ENCODE measurements at regions of chr6 and their contacts with region 1.

Region 1: GRCh38 chr6:39302669-39303424 is 11.4 kb downstream of the KCNK17 start:
- DNase-seq: peak; percentile 25 to 41
- ATAC-seq: peak in 1 of 2 donors; percentile 66
- H3K4me3 ChIP-seq: no peak overlapping the region
- H3K27ac ChIP-seq: no peak overlapping the region
- H3K4me1 ChIP-seq: no peaks in the 10 kb centered on the region
- H3K27me3 ChIP-seq: peaks cover 0 to 7% (median 0%) of the 10 kb centered on the region in 3 donors
- CTCF ChIP-seq: peak; percentile 55 to 83 (median 73)
- POLR2A ChIP-seq: no peak

Region 2: DNA sequence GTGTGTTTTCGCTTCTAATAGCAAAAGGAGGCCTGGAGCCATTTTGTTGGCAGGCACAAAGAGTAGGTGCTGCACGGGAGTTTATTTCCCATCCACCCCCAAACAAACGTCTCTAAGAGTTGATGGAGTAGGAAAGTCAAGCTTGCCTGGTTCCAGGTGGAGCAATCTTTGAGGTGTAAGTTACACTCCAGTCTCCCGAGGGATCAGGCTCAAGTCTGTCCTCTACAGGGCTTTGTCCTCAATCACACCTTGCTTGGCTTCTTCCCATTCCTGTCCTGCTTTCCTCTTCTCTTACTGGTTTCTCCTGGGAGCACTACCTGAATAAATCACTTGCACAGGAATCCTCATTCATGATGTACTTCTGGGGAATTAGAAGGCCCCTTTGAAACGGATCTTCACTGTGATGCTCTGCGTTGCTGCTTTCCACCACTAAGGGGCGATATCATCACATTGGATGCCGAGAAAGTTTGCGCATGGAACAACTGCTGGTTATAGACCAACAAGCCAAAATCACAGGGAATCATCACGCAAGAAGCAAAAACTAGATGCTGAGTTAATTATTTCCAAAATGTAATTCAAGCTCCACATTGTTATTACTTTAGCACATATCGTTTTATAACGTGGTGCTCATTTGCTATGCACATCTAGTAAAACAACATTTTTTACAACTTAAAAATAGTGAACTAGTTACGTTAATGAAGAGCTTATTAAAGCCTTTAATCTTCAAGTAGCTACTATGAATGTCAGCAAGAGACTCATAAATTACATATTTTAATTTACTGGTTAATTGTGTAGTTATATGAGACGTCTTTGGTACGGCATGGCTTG is 430.9 kb before region 1 on chr6:
- in situ Hi-C with region 1: loop called (anchors 5 to 25 kb)
- intact Hi-C with region 1: no loop called
- DNase-seq: no peak
- ATAC-seq: no peak
- H3K4me3 ChIP-seq: no peak overlapping the region
- H3K27ac ChIP-seq: no peak overlapping the region
- H3K4me1 ChIP-seq: no peaks in the 10 kb centered on the region
- H3K27me3 ChIP-seq: peaks cover 0 to 5% (median 0%) of the 10 kb centered on the region in 3 donors
- CTCF ChIP-seq: peak; percentile 40 to 77 (median 54)
- POLR2A ChIP-seq: no peak

Region 3: GRCh38 chr6:38973178-38974054 is 329.4 kb before region 1 on chr6:
- in situ Hi-C with region 1: loop called in 3 of 4 experiments (anchors 10 to 25 kb)
- intact Hi-C with region 1: loop called (anchors 2 kb)
- DNase-seq: no peak
- ATAC-seq: peak; percentile 55 to 74
- H3K4me3 ChIP-seq: no peak overlapping the region
- H3K27ac ChIP-seq: no peak overlapping the region
- H3K4me1 ChIP-seq: no peaks in the 10 kb centered on the region
- H3K27me3 ChIP-seq: peaks cover 0 to 5% (median 0%) of the 10 kb centered on the region in 3 donors
- CTCF ChIP-seq: peak in 4 of 5 experiments; percentile 14 to 37 (median 26)
- POLR2A ChIP-seq: no peak

Region 4: DNA sequence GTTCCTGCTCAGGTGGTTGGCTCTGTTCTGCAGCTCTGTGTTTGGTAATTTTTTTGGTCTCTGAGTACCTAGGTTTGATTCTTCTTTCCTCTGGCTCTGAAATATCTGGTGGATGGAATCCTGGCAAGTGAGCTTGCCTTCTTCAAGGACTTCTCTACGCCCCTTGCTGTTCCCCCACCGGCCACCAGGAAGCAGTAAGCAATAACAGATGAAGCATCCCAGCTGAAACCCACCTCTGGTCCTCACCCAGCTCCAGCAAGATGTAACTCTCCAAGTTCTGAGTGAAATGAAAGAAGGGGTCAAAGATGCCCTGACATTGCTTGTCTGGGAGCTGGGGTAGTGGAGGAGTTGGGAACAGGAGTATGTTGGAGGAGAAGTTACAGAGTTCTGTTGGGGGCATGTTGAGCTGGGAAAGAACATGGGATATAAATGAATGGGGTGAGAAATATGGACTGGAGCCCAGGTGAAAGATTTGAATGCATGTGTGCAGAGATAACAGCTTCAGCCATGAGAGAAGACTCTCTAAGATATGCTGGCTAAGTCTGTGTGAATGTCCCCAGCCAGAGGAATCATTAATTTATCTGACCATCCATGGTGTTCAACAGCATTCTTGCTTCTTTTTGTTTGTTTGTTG is 305.6 kb before region 1 on chr6:
- in situ Hi-C with region 1: loop called in 2 of 4 experiments (anchors 25 kb)
- intact Hi-C with region 1: no loop called
- DNase-seq: no peak
- ATAC-seq: no peak
- H3K4me3 ChIP-seq: no peak overlapping the region
- H3K27ac ChIP-seq: no peak overlapping the region
- H3K4me1 ChIP-seq: no peaks in the 10 kb centered on the region
- H3K27me3 ChIP-seq: peaks cover 0 to 5% (median 3%) of the 10 kb centered on the region in 3 donors
- CTCF ChIP-seq: peak in 2 of 5 experiments; percentile 24 to 31
- POLR2A ChIP-seq: no peak

Region 5: DNA sequence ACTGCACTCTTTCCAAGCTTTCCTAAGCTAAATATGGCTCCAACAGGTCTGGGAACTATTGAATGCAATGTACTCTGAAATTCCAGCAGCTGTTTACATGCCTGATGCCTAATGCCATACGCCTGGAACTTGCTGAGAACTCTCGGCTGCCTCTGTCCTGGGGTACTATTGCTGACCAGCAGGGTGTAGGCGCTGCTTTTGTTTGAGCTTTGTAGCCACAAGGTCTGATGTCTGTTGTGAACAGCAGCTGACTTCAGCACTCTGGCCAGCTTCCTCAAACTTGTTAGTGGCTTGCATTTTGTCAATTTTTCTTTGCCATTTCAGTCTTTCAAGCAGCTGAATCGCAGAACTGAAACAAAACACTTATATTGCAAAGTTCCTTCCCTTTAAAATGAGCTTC is 214.5 kb before region 1 on chr6:
- in situ Hi-C with region 1: no loop called
- intact Hi-C with region 1: loop called (anchors 5 kb)
- DNase-seq: peak; percentile 15 to 24
- ATAC-seq: peak; percentile 63 to 75
- H3K4me3 ChIP-seq: no peak overlapping the region
- H3K27ac ChIP-seq: no peak overlapping the region
- H3K4me1 ChIP-seq: peaks cover 24 to 42% of the 10 kb centered on the region in 2 donors
- H3K27me3 ChIP-seq: no peaks in the 10 kb centered on the region
- CTCF ChIP-seq: peak in 4 of 5 experiments; percentile 6 to 46 (median 38)
- POLR2A ChIP-seq: no peak

Region 6: GRCh38 chr6:39166189-39166911 is 136.5 kb before region 1 on chr6:
- in situ Hi-C with region 1: loop called (anchors 5 to 10 kb)
- intact Hi-C with region 1: loop called (anchors 1 kb)
- DNase-seq: peak; percentile 26 to 29
- ATAC-seq: peak in 1 of 2 donors; percentile 58
- H3K4me3 ChIP-seq: no peak overlapping the region
- H3K27ac ChIP-seq: no peak overlapping the region
- H3K4me1 ChIP-seq: no peaks in the 10 kb centered on the region
- H3K27me3 ChIP-seq: peaks cover 0 to 4% (median 0%) of the 10 kb centered on the region in 3 donors
- CTCF ChIP-seq: peak; percentile 56 to 81 (median 74)
- POLR2A ChIP-seq: no peak